ENCODE measurements at regions of chr7 and their contacts with region 1.

Region 1: GRCh38 chr7:148962823-148963582 is 65.3 kb downstream of the PDIA4 start:
- DNase-seq: peak; percentile 61 to 81
- ATAC-seq: peak; percentile 81 to 89 (median 83)
- H3K4me3 ChIP-seq: peak overlapping the region; percentile 68
- H3K27ac ChIP-seq: peak overlapping the region; percentile 75
- H3K4me1 ChIP-seq: peaks cover 4% of the 10 kb centered on the region
- H3K27me3 ChIP-seq: no peaks in the 10 kb centered on the region
- CTCF ChIP-seq: peak; percentile 71

Region 2: GRCh38 chr7:148503875-148504487 is 459.0 kb before region 1 on chr7:
- intact Hi-C with region 1: loop called (anchors 2 to 5 kb)
- DNase-seq: no peak
- ATAC-seq: no peak
- H3K4me3 ChIP-seq: no peak overlapping the region
- H3K27ac ChIP-seq: no peak overlapping the region
- H3K4me1 ChIP-seq: no peaks in the 10 kb centered on the region
- H3K27me3 ChIP-seq: peaks cover 0 to 18% (median 3%) of the 10 kb centered on the region in 3 donors
- CTCF ChIP-seq: peak; percentile 79

Region 3: GRCh38 chr7:148570510-148570909 is 392.5 kb before region 1 on chr7:
- intact Hi-C with region 1: loop called in 1 of 2 experiments (anchors 5 kb)
- DNase-seq: no peak
- ATAC-seq: no peak
- H3K4me3 ChIP-seq: no peak overlapping the region
- H3K27ac ChIP-seq: no peak overlapping the region
- H3K4me1 ChIP-seq: no peaks in the 10 kb centered on the region
- H3K27me3 ChIP-seq: no peaks in the 10 kb centered on the region
- CTCF ChIP-seq: no peak

Region 4: DNA sequence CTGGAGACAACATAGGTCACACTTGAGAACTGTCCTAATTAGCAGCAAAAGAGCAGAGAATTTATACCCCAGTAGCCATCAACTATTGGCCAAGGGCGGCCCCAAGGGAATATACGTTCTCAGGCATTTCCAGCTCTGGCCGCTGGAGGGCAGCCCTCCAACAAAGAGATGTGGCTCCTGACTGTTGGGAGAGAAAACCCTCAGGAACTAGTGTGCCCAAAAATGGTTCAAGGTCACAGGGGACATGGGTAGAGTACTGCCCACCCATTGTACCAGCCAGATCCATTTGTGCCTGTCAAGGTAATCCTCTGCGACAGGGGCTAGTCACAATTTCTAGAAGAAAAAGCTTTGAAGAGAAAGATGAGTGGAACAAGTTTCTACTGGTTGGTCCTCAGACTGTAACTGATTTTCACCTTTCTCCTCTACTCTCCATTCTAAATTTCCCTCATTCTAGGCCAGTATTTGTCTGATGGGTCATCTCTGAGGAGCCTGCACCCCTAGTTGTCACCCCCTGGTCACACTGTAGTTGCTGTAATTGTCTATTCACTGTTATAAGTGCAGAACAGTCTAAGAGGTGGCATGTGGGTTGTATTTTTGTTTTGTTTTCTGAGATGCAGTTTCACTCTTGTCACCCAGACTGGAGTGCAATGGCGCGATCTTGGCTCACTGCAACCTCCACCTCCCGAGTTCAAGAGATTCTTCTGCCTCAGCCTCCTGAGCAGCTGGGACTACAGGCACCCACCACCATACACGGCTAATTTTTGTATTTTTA is 387.2 kb before region 1 on chr7:
- intact Hi-C with region 1: loop called (anchors 2 to 5 kb)
- DNase-seq: peak; percentile 58 to 71
- ATAC-seq: peak; percentile 65 to 87 (median 73)
- H3K4me3 ChIP-seq: no peak overlapping the region
- H3K27ac ChIP-seq: no peak overlapping the region
- H3K4me1 ChIP-seq: no peaks in the 10 kb centered on the region
- H3K27me3 ChIP-seq: no peaks in the 10 kb centered on the region
- CTCF ChIP-seq: peak; percentile 84

Region 5: DNA sequence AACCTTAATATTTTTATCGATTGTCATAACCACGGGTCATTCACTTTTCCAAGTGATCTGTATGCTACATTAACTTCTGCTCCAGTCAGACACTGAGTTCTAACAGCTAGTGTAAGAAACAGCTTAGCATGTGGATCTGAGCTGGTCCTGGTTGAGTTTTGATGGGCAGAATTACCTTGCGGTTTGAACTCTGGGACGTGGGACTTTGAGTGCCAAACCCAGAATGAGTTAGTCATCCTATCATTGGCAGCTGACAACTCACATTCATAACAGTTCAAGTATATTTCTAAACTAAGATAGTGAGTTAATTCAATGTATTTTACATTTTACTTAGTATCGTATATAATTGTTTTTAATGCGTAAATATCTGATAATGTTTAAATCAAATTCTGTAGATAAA is 329.2 kb before region 1 on chr7:
- intact Hi-C with region 1: no loop called
- DNase-seq: no peak
- ATAC-seq: peak in 3 of 4 donors; percentile 59 to 74 (median 61)
- H3K4me3 ChIP-seq: no peak overlapping the region
- H3K27ac ChIP-seq: no peak overlapping the region
- H3K4me1 ChIP-seq: no peaks in the 10 kb centered on the region
- H3K27me3 ChIP-seq: no peaks in the 10 kb centered on the region
- CTCF ChIP-seq: no peak

Region 6: DNA sequence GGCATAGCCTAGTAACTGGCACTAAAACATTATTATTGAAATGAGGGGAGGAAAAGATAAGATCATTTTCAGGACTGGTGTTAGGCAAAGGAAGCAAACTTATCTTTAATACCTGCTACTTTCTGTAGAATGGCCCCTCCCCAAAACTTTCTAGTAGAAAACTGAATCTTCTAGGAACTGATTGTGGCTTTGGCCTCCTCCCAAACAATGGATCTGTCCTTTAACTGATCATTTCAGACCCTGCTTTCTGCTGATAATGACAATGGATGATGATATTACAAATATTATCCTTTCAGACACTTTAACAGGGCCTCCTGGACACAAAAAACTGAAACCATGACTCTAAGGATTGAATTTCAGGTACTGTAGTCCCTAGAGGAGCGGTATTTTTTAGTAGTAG is 134.0 kb before region 1 on chr7:
- intact Hi-C with region 1: no loop called
- DNase-seq: no peak
- ATAC-seq: no peak
- H3K4me3 ChIP-seq: no peak overlapping the region
- H3K27ac ChIP-seq: no peak overlapping the region
- H3K4me1 ChIP-seq: no peaks in the 10 kb centered on the region
- H3K27me3 ChIP-seq: no peaks in the 10 kb centered on the region
- CTCF ChIP-seq: no peak

Region 7: GRCh38 chr7:148856891-148857290 is 106.1 kb before region 1 on chr7:
- intact Hi-C with region 1: loop called (anchors 5 kb)
- DNase-seq: no peak
- ATAC-seq: no peak
- H3K4me3 ChIP-seq: no peak overlapping the region
- H3K27ac ChIP-seq: no peak overlapping the region
- H3K4me1 ChIP-seq: no peaks in the 10 kb centered on the region
- H3K27me3 ChIP-seq: no peaks in the 10 kb centered on the region
- CTCF ChIP-seq: no peak

Region 8: DNA sequence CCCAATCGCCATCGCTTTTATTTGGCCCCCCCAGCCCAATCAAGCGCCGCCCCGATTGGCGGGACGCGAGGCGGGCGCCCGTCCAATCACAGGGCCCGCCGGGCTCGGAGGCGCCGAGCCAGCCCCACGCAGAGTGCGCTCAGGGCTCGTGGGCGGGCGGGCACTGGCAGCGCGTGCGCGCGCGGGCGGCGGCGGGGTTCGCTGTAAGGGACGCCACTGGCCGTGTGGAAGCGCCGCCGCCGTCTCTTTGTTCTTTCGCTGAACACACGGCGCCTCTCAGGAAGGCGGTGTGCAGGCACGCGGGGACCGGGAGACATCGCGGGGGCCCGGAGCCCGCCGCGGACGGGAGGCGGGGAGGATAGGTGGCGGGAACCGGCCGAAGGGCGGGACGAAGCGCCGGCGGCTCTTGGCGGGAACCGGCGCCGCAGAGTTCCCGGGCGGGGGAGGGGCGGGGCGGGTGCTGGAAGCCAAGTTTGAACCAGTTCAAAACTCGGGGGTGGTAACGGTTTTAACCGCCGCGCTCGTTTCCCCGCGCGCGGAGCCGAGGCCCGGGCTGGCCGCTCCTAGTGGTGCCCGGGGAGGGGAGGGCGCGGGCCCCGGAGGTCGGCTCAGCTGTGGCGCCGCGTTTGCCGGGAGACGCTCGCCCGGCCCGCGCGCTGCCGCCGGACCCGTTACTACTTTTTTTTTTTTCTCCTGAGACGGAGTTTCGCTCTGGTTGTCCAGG is 78.5 kb before region 1 on chr7:
- intact Hi-C with region 1: loop called in 1 of 2 experiments (anchors 5 kb)
- DNase-seq: peak; percentile 94 to 96
- ATAC-seq: peak; percentile 98 to 99 (median 99)
- H3K4me3 ChIP-seq: peak overlapping the region; percentile 93
- H3K27ac ChIP-seq: peak overlapping the region; percentile 93
- H3K4me1 ChIP-seq: no peaks in the 10 kb centered on the region
- H3K27me3 ChIP-seq: no peaks in the 10 kb centered on the region
- CTCF ChIP-seq: no peak

Region 9: DNA sequence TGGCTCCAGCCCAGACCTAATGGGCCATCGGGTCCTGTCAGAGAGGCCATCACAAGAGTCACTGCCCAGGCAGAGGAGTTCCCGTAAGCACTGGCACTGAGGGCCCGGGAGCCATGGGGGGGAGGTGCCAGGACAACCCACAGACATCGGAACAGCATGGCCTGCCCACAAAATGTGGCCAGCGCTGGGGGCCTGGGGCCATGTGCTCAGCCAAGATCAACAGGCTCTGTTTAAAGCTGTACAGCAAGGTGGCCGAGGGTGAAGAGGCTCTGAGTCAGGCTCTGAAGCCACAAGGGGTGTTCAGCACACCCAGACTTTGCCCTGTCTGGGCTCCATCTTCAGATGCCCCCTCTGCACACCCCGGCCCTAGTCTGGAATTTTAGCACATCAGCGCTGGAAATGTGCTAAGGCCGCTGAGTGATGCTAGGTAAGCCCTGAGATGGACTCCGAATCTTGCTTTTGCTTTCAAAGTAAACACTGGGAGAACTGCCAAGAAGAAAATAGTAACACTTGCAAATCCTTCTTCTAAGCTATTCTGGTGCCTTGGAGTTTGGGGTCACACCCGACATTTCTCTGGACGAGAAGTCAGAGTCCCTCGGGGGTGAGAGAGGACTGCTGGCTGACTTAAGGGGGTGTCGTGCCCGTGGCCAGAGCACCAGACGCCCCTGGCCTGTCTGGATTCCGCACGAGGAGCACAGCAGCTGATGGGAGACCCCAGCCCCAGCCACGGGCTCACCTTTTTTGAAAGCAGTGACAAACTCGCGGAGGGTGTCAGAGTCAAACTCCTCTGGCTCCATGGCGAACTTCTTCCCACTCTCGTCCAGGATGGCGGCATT is 41.6 kb after region 1 on chr7:
- intact Hi-C with region 1: no loop called
- DNase-seq: no peak
- ATAC-seq: no peak
- H3K4me3 ChIP-seq: no peak overlapping the region
- H3K27ac ChIP-seq: no peak overlapping the region
- H3K4me1 ChIP-seq: no peaks in the 10 kb centered on the region
- H3K27me3 ChIP-seq: no peaks in the 10 kb centered on the region
- CTCF ChIP-seq: no peak

Region 10: DNA sequence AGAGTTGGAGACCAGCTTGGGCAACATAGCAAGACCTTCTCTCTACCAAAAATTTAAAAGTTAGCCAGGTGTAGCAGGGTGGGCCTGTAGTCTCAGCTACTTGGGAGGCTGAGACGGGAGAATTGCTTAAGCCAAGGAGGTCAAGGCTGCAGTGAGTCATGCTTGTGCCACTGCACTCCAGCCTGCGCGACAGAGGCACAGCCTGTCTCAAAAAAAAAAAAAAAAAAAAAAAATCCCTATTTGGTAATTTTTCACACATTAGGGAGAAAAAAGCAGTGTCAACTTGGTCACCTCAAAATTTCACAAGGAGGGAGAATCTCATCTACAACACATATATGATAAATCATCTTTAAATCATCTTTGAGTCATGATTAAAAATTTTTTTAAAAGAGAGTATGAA is 177.8 kb after region 1 on chr7:
- intact Hi-C with region 1: no loop called
- DNase-seq: no peak
- ATAC-seq: no peak
- H3K4me3 ChIP-seq: no peak overlapping the region
- H3K27ac ChIP-seq: no peak overlapping the region
- H3K4me1 ChIP-seq: no peaks in the 10 kb centered on the region
- H3K27me3 ChIP-seq: no peaks in the 10 kb centered on the region
- CTCF ChIP-seq: no peak